ENCODE measurements at regions of chr6 and their contacts with region 1.

Region 1: GRCh38 chr6:144482142-144482541 is 197.0 kb downstream of the UTRN start:
- DNase-seq: peak; percentile 39
- ATAC-seq: peak; percentile 91
- H3K4me3 Mint-ChIP-seq: no peak overlapping the region
- H3K27ac Mint-ChIP-seq: peak overlapping the region; percentile 41
- H3K4me1 Mint-ChIP-seq: no peaks in the 10 kb centered on the region
- H3K27me3 Mint-ChIP-seq: no peaks in the 10 kb centered on the region
- CTCF ChIP-seq: no peak

Region 2: GRCh38 chr6:143940011-143940597 is 542.0 kb before region 1 on chr6:
- CTCF ChIA-PET with region 1: no interaction called
- POLR2A ChIA-PET with region 1: no interaction called
- intact Hi-C with region 1: loop called (anchors 5 kb)
- DNase-seq: no peak
- ATAC-seq: peak; percentile 98
- H3K4me3 Mint-ChIP-seq: no peak overlapping the region
- H3K27ac Mint-ChIP-seq: no peak overlapping the region
- H3K4me1 Mint-ChIP-seq: no peaks in the 10 kb centered on the region
- H3K27me3 Mint-ChIP-seq: no peaks in the 10 kb centered on the region
- CTCF ChIP-seq: no peak

Region 3: DNA sequence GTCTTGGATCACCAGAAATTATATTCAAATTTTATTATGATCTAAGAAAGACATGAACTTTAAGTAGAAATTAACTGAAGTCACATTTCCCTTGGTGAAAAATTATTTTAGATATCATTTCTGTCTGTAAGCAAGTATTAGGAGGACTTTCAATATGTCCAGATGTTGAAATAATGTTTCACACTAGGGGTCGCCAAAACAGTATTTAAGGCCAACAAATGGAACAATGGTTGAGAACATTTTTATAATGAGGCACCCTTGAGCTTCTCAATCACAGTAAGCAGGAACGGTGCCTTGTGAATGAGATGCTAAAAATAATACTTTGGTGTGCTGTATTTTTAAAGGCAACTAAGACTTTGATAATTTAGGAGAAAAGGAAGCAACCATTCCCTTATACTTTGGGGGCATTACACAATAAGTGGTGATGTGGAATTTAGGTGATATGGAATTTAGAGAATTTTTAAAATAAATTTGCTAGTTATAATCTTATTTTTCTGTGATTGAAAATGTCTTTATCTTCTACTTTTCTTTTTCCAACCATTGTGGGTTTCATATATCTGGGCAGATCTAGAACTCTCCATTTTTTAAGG is 377.1 kb before region 1 on chr6:
- CTCF ChIA-PET with region 1: interaction called, 34 read pairs
- POLR2A ChIA-PET with region 1: interaction called, 7 read pairs
- intact Hi-C with region 1: loop called (anchors 1 kb)
- DNase-seq: no peak
- ATAC-seq: peak; percentile 95
- H3K4me3 Mint-ChIP-seq: no peak overlapping the region
- H3K27ac Mint-ChIP-seq: no peak overlapping the region
- H3K4me1 Mint-ChIP-seq: no peaks in the 10 kb centered on the region
- H3K27me3 Mint-ChIP-seq: no peaks in the 10 kb centered on the region
- CTCF ChIP-seq: no peak

Region 4: DNA sequence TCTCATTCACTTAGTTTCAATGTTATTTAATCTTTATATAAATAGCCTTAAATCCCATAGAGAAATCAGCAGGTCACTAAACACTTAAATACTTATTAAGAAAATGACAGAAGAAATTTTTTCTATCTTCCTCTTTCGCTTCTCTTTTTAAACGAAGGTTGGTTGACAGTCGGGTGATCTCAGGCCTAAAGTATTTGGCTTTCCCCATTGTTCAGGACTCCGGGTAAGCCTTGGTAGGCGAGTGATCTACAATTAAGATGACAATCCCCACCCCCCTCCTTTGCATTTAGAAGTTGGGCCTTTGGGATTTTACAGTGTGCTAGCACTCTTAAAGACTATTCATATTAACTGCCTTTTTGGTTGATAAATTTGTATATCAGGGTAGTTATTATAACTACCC is 216.8 kb before region 1 on chr6:
- CTCF ChIA-PET with region 1: interaction called, 5 read pairs
- POLR2A ChIA-PET with region 1: no interaction called
- intact Hi-C with region 1: loop called (anchors 5 kb)
- DNase-seq: no peak
- ATAC-seq: peak; percentile 97
- H3K4me3 Mint-ChIP-seq: no peak overlapping the region
- H3K27ac Mint-ChIP-seq: peak overlapping the region; percentile 63
- H3K4me1 Mint-ChIP-seq: peaks cover 23% of the 10 kb centered on the region
- H3K27me3 Mint-ChIP-seq: no peaks in the 10 kb centered on the region
- CTCF ChIP-seq: no peak